ENCODE measurements at regions of chr12 and their contacts with region 1.

Region 1: GRCh38 chr12:92244036-92244435 is 98.4 kb upstream of the BTG1 start:
- DNase-seq: no peak
- ATAC-seq: peak; percentile 94

Region 2: DNA sequence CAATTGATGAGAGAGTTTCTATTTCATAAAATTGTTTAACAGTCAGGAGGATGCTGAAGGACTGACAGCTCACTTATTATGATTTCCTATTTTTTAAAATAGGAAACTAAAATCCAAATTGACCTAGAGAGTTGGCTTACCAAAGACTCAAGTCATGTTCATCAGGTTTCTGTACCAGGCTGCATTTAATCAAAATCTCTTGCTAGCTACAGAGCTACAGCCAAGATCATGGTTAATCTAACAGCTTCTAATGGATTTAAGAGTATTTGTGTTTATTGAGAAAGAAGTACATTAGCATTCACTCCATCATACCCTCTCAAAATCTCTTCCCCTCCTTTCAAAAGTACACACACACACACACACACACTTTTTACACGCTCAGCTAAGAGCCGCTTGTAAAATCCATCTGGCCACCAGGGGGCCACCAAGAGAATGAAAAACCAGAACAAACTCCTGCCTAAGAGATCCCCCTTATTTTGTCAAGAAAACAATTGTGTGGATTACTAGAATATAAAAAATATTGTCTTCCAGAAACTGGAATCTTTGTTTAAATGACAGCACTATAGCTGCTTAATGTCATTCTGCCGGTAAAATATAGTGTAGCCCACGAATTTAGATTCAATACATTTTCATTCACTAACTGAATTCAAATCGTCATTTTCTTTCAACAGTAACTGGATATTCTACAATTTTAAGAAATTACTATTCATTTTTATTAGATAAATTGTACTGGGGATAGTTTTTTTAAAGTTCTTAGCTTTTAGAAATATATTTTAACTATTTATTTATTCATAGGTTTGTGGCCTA is 432.4 kb before region 1 on chr12:
- intact Hi-C with region 1: loop called (anchors 10 kb)
- DNase-seq: peak; percentile 82
- ATAC-seq: peak; percentile 85

Region 3: GRCh38 chr12:92178340-92178739 is 65.7 kb before region 1 on chr12:
- intact Hi-C with region 1: no loop called
- DNase-seq: no peak
- ATAC-seq: no peak

Measured in Right ventricle myocardium superior (tissue), 1 donor.